BJ (cell line): ENCODE measurements at regions of chr19 and their contacts with region 1.

Region 1: GRCh38 chr19:10000171-10000826 is 10.0 kb downstream of the COL5A3 start:
- DNase-seq: no peak
- H3K4me3 ChIP-seq: no peak overlapping the region
- H3K27me3 ChIP-seq: no peaks in the 10 kb centered on the region
- CTCF ChIP-seq: peak; percentile 92

Region 2: DNA sequence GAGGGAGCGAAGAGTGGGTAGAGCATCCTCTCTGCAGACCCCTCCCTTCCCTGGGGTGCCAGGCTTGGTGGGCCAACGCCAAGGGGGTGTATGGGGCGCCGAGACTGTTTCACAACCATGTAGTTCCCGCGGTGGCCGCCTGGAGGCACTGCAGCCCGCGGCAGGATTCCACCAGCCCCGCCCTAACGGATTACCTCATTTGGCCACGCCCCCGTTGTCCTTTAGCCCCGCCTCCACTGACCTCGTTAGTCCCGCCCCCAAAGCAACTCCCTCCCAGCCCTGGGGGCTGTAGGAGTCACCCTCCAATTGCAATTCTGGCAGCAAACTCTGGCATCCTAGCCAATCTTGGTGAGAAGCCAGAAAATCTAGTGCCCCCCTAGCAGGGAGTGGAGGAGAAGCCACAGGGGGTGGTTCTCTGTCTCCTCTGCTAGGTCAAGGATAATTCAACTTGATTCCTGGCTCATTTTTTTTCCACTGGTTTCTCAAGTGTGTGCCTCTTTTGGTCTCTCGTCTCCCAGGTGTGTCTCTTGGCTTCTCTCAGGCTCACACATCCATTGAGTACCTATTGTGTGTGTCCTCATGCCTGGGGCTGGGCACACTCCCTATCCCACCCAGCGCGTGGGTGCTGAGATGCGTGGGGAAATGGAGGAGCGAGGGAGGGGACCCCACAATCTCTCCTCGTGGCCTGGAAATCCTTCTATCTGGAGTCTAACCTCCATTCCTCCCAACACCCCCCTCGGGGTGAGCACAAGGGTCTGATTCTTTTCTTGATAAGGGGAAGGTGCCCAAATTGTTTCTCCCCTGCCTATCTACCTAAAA is 66.0 kb before region 1 on chr19:
- CTCF ChIA-PET with region 1: interaction called, 55 read pairs
- POLR2A ChIA-PET with region 1: no interaction called
- DNase-seq: no peak
- H3K4me3 ChIP-seq: no peak overlapping the region
- H3K27me3 ChIP-seq: peaks cover 18% of the 10 kb centered on the region
- CTCF ChIP-seq: peak; percentile 98

Region 3: DNA sequence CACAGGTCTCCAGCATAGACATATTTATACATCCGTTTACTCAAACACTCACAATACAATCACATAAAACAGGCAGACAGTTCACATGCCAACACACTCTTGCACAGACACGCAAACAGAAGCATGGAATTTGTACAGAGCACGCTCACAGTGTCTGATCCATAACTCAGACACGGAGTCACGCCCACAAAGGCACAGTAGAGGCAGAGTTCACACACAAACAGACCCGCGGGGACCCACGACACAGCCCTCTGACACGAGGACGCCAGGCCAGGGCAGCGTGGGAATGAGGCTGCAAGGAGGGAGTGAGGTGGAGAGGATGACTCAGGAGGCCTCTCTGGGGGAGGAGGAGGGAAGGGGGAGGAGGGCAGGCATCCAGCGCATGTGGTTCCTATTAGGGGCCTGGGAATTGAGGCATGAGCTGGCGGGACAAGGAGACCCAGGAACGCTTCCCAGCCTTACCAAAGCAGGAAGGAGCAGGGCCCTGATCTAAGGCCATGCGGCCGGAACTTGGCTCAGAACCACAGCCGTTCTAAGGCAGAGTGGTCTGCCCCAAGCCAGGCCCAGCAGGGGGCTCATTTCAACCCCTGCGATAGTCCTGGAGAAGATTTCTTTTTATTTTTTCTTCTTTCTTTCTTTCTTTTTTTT is 54.9 kb before region 1 on chr19:
- CTCF ChIA-PET with region 1: interaction called, 31 read pairs
- POLR2A ChIA-PET with region 1: no interaction called
- DNase-seq: peak; percentile 100
- H3K4me3 ChIP-seq: no peak overlapping the region
- H3K27me3 ChIP-seq: no peaks in the 10 kb centered on the region
- CTCF ChIP-seq: peak; percentile 28; the same call in 1 of the 2 replicates

Region 4: DNA sequence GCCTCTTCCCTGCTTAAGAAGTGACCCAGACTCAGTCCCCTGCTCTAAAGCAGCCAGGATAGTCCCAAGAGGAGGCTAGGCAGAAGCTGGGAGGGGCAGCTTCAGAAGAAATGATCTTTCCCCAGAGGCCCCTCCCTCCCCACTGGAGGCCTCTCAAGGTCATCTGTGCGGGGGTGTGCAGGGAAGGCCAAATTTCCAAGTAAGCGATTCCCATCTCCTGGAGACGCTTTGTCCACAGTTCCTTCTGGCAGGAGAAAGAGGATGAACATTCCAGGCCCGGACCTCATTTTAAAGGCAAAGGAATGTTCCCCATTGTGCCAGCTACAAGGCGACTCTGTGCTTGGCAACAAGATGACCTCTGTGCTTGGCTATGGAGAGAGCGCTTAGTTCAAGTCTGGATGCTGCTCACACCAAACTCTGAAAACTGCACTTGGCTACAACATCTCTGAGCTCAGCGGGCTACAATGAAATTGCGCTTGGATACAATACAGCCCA is 13.5 kb before region 1 on chr19:
- CTCF ChIA-PET with region 1: interaction called, 64 read pairs
- POLR2A ChIA-PET with region 1: no interaction called
- DNase-seq: peak; percentile 35
- H3K4me3 ChIP-seq: no peak overlapping the region
- H3K27me3 ChIP-seq: no peaks in the 10 kb centered on the region
- CTCF ChIP-seq: no peak

Region 5: GRCh38 chr19:10027158-10027693 is 26.9 kb after region 1 on chr19:
- CTCF ChIA-PET with region 1: interaction called, 43 read pairs
- POLR2A ChIA-PET with region 1: no interaction called
- DNase-seq: no peak
- H3K4me3 ChIP-seq: no peak overlapping the region
- H3K27me3 ChIP-seq: peaks cover 3% of the 10 kb centered on the region
- CTCF ChIP-seq: no peak